Sciatic nerve (tissue), 2 donors: ENCODE measurements at regions of chr5 and their contacts with region 1.

Region 1: GRCh38 chr5:56200856-56201666 is 32.1 kb downstream of the ANKRD55 start:
- DNase-seq: peak; percentile 63
- ATAC-seq: peak; percentile 98

Region 2: GRCh38 chr5:55982957-55983381 is 218.1 kb before region 1 on chr5:
- intact Hi-C with region 1: loop called (anchors 10 kb)
- DNase-seq: no peak
- ATAC-seq: peak; percentile 55

Region 3: GRCh38 chr5:56148453-56148971 is 52.5 kb before region 1 on chr5:
- intact Hi-C with region 1: no loop called
- DNase-seq: no peak
- ATAC-seq: no peak